Sciatic nerve (tissue), 2 donors: ENCODE measurements at regions of chr20 and their contacts with region 1.

Region 1: DNA sequence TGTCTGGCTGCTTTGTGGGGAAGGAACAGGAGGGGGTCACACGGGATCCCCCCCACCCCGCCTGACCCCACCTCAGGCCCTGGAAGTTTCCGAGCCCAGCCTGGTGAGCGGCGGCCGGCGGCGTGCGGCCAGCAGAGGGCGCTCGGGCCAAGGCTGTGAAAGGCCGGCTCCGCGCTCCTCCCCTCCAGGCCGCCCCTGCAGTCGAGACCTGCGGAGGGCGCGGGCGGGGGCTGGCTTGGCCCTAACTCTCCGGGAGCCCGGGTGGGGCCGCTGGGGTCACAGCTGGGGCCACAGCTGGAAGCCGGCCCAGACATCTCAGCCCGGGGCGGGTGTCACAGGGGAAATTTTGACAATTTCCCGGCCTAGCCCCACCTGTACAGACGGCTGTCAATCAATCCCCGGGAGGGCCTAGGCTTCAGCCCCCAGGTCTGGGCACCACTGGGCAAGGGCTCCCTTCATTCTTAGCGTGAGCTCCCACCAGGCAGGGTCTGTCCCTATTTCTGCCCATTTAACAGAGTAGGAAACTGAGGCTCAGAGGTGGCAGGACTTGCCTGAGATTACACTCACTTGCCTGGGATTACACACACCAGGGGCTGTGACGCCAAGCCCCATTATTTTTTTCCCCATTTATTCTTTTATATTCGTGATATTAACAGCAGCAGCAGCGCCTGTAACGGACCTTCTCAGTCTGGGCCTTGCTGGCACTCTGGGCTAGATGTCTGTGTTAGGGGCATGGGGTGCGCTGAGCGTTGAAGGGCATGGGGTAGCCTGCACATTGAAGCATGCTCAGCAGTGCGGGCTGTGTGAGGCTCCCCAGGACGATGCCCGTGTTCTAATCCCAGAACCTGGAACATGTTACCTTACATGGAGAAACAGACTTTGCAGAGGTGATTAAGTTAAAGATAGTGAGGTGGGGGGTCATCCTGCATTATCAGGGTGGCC is 23.0 kb downstream of the ZBP1 start:
- DNase-seq: peak; percentile 86
- ATAC-seq: peak; percentile 78

Region 2: DNA sequence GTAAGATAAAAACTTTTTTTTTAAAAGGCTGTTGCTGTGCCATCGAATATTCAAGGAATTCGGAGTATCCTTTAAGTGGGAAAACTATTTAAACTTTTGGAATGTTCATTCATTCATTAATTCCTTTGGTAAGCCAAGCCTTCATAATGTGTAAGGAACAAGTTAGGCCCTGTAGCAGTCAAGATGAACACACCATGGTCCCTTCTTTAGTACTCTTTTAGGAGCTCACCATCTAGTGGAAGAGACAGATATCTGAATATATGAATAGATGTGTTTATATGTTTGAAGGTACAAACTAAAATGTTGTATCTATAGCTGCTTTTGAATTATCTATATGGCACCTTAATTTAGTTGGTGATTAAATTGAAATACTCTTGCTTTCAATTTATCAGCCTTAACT is 261.9 kb before region 1 on chr20:
- intact Hi-C with region 1: no loop called
- DNase-seq: no peak
- ATAC-seq: peak; percentile 59

Region 3: GRCh38 chr20:57391074-57391554 is 206.2 kb before region 1 on chr20 and contains the start of gene RBM38:
- intact Hi-C with region 1: loop called (anchors 10 kb)
- DNase-seq: peak; percentile 84
- ATAC-seq: peak; percentile 75
- total RNA-seq, gene RBM38: 28.1 TPM

Region 4: DNA sequence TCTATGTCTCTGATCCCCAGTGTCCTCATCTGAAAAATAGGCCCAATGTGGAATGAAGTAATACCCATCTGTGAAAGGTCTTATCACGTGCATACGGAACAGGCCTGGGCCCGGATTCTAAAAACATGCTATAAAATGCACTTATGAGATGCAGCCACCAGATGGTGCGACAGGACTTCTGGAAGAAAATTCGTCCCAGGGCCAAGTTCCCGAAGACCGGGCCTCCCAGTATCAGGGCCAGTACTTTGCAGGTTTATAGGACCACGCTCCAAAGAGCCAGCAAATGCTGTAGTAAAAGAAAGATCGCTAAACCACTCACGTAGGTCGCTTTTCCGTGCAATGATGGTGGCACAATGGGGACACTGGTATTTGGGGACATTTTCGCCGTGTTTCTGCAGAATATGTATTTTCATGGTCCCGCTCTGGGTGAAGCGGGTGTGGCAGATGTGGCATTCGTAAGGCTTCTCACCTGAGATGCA is 83.0 kb before region 1 on chr20:
- intact Hi-C with region 1: loop called (anchors 2 kb)
- DNase-seq: peak; percentile 82
- ATAC-seq: peak; percentile 86

Region 5: DNA sequence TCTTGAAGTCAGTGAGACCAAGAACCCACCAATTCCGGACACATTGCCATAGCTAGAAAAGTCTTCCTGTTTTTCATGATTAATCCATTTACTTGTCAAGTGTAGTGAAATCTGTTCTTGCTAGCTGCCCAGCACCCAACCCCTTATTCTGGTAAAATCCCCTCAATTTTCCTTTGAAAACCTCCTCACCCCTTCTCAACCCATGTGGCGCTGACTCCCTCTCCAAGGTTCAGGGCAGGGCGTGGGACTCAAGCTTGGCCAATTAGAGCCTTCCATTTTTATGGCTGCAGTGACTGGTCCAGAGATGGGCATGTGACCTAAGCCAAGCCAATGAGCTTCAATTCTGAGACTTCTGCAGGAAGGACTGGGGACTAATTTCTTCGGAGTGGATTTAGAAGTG is 32.8 kb after region 1 on chr20:
- intact Hi-C with region 1: no loop called
- DNase-seq: no peak
- ATAC-seq: peak; percentile 67

Region 6: DNA sequence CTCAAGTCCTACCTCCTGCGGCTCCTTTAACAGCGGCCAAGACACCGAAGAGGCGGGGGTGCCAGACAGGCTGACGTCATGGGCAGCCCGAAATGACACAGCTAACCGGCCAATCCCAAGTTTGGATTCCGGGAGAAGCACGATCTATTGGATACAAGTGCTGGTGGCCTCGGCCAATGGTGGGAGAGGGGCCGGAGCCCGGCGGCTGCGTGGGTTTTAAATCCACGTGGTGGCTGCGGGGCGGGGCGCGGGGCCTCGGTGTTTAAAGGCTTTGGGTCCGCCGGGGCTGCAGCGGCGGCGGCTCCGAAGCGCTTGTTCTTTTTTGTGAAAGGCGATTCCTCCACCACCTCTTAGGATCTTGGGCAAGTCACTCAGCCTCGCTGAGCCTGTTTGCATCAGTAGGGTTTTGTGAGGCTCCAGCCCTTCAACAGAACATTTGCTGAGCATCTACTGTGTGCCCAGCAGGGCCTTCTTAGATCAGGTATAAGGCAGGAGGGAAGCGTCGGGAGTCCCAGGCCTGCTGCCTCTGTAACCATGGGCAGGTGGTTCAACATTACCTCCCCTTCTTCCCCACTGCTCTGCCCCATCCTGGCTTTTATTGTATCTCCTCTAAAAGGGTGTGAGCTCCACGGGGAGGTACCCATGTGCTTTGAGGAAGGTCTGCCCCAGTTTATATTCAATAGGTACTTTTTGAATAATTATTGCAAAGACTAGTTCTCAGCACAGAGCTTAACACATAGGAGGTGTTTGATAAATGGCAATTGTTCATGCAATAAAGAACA is 121.4 kb after region 1 on chr20:
- intact Hi-C with region 1: no loop called
- DNase-seq: peak; percentile 97
- ATAC-seq: peak; percentile 99

Region 7: DNA sequence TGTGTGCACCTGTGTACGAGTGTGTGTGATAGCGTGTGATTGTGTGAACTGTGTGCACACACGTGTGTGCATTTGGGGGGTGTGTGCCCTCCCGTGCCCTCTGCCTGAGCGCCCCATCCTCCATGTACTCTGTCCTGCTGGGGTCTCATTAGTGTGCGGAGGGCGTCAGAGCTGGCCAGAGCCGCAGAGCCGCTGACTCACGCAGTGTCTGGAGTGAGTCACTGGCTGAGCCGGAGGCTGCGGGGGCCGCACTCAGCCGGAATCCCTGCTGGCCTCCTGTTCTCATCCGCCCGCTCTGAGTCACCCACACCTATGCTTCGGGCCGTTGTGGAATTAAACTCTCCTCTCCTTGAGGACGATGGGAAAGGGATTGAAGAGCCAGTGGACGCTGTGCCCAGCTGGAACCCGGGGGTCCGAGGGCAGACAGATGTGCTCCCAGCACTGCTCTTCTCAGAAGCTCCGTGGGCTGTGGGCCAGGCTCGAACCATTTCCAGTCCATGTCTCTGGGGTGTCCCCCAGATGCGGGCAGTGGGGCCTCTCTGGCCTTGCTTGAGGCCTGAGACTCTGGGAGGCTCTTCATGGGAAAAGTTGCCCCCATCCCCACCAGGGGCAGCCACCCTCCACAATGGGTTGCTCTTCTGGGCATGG is 1026.7 kb after region 1 on chr20:
- intact Hi-C with region 1: no loop called
- DNase-seq: no peak
- ATAC-seq: peak; percentile 76